HEK293 (cell line): ENCODE measurements at regions of chr1 and their contacts with region 1.

Region 1: GRCh38 chr1:165073185-165074007 is 283.1 kb downstream of the LMX1A start:
- H3K4me3 ChIP-seq: no peak overlapping the region
- H3K27ac ChIP-seq: no peak overlapping the region
- H3K4me1 ChIP-seq: no peaks in the 10 kb centered on the region
- CTCF ChIP-seq: peak; percentile 68

Region 2: GRCh38 chr1:164163289-164163864 is 910.0 kb before region 1 on chr1:
- CTCF ChIA-PET with region 1: interaction called, 11 read pairs
- POLR2A ChIA-PET with region 1: no interaction called
- H3K4me3 ChIP-seq: no peak overlapping the region
- H3K27ac ChIP-seq: no peak overlapping the region
- H3K4me1 ChIP-seq: no peaks in the 10 kb centered on the region
- CTCF ChIP-seq: no peak

Region 3: DNA sequence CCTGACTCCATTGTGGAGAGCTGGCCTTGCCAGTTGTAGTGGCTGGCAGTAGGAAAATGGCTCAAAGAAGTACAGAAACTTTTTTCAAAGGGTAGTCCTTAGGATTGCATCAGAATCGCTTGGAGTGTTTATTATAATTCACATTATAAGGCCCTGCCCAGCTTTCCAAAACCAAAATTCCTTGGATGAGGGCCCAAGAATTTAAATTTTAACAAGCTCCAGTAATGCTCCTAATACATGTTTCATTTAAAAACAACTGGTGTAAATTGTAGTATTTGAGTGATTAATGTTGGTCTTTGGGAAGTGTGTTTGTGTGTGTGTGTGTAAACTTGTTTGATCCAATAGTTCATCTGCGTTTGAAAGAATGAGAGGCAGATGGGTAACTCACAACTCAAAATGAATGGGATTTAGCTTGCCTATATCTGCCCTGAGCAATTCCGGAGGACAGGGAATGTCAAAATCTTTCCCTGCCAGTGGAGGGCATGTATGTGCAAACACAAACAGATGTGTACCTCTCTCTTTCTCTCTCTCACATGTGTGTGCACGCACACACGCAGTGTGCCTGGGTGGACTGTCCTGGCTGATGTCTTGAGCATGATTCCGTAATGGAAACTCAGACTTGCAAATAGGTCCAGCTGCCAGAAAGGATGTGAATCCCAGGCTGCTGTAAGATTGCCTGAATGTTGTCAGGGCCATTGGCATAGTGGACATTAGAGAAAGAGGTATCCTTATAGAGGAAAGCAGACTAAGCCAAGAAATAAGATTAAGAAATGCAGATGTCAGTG is 10.0 kb before region 1 on chr1:
- CTCF ChIA-PET with region 1: interaction called, 14 read pairs
- POLR2A ChIA-PET with region 1: no interaction called
- H3K4me3 ChIP-seq: no peak overlapping the region
- H3K27ac ChIP-seq: no peak overlapping the region
- H3K4me1 ChIP-seq: no peaks in the 10 kb centered on the region
- CTCF ChIP-seq: no peak